PC-9 (cell line): ENCODE measurements at regions of chr6 and their contacts with region 1.

Region 1: DNA sequence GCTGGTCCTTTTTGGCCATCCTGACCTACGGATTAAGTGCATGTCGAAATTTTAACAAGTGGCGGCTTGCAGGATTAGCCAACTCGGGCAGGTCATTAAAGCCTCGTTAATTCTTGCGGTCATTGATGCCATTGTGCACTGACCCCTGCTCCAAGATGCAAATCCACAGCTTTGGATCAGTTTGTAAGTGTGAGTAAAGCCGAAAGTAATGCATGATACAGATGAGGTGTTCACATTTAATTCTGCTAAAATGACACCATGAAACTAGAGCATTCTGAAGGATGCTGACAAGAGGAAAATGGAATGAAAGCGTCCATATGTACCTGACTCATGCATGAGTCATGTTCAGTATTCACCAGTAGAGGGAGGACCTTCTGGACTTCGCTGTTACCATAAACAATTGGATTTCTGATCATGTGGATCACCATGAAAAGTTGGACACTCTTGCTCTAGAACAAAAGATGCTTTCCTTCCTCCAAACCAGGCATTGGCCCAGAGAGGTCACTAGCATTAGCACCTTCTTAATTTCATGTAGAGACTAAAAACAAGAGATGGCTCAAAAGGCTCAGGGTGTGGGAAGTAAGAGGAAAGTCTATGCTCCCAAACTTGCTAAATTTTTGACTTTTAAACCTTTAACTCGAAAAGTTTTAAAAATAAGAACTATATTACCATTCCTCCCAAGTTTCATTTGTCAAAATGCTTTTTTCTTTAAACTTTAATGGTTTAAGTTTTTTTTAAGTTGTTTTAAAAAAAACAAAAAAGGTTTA is 48.0 kb downstream of the MUC22 start:
- DNase-seq: peak; percentile 40 to 97
- H3K4me3 ChIP-seq: no peak overlapping the region
- H3K27ac ChIP-seq: peak overlapping the region; percentile 57
- H3K4me1 ChIP-seq: peaks cover 43% of the 10 kb centered on the region
- H3K27me3 ChIP-seq: no peaks in the 10 kb centered on the region
- CTCF ChIP-seq: peak; percentile 63

Region 2: GRCh38 chr6:30800871-30801270 is 257.4 kb before region 1 on chr6:
- CTCF ChIA-PET with region 1: interaction called, 10 read pairs
- POLR2A ChIA-PET with region 1: no interaction called
- intact Hi-C with region 1: no loop called
- DNase-seq: no peak
- H3K4me3 ChIP-seq: no peak overlapping the region
- H3K27ac ChIP-seq: no peak overlapping the region
- H3K4me1 ChIP-seq: peaks cover 8% of the 10 kb centered on the region
- H3K27me3 ChIP-seq: no peaks in the 10 kb centered on the region
- CTCF ChIP-seq: no peak

Region 3: GRCh38 chr6:31007694-31008093 is 50.6 kb before region 1 on chr6:
- CTCF ChIA-PET with region 1: no interaction called
- POLR2A ChIA-PET with region 1: no interaction called
- intact Hi-C with region 1: loop called (anchors 5 kb)
- DNase-seq: peak; percentile 58 to 97
- H3K4me3 ChIP-seq: no peak overlapping the region
- H3K27ac ChIP-seq: peak overlapping the region; percentile 75
- H3K4me1 ChIP-seq: peaks cover 67% of the 10 kb centered on the region
- H3K27me3 ChIP-seq: no peaks in the 10 kb centered on the region
- CTCF ChIP-seq: no peak

Region 4: DNA sequence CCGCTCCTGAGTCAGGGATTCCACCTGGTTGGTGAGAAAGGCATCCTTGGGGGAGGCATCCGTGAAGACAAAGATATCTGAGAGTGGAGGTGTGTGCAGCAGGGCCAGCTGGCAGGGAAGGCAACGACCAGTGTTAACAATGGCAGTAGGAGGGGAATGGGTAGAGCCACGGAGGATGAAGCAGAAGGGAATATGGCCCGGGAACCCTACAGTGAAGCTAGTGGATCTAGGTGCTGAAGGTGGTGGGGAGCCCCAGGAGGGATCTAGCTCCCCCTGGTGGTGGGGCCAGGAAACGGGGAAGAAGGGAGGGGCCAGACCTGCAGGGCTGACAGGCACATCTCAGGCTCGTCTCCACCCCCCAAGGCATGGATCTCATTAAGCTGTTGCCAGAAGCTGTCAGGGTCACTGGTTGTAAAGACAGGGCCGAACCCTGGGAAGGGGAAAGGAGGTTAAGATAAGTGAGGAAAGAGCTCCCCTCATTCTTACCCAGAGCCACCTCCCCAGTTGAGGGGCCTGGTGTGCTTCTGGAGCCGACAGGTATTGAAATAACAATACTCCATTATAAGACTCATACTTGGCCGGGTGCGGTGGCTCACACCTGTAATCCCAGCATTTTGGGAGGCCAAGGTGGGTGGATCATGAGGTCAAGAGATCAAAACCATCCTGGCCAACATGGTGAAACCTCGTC is 711.5 kb after region 1 on chr6:
- CTCF ChIA-PET with region 1: no interaction called
- POLR2A ChIA-PET with region 1: no interaction called
- intact Hi-C with region 1: no loop called
- DNase-seq: peak; percentile 55 to 83
- H3K4me3 ChIP-seq: no peak overlapping the region
- H3K27ac ChIP-seq: no peak overlapping the region
- H3K4me1 ChIP-seq: peaks cover 5% of the 10 kb centered on the region
- H3K27me3 ChIP-seq: no peaks in the 10 kb centered on the region
- CTCF ChIP-seq: peak; percentile 93